ENCODE measurements at regions of chr3 and their contacts with region 1.

Region 1: DNA sequence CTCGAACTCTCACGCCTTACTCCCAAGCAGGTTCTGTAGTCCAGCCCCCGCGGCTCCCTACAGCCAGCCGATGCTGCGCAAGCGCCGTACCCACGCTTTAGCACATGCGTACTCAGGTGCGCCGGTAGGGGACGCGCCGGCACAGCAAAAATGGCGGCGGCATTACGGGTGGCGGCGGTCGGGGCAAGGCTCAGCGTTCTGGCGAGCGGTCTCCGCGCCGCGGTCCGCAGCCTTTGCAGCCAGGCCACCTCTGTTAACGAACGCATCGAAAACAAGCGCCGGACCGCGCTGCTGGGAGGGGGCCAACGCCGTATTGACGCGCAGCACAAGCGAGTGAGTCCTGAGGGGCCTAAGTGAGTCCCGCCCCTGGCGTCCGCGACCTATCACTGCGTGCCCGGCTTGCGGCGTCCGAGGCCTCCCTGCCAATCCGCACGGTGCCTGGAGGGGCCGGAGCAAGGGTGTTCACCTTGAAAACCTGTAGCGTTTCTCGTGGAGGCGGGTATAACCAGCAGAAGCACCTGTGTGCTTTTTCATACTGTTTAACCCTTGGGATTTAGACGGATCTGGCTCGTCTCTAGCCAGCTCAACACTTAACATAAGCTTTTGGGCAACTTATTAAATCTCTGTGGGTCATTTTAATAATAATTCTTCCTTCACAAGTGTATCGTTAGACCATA is at the start of gene PCCB:
- DNase-seq: peak; percentile 88
- ATAC-seq: peak; percentile 96
- H3K4me3 Mint-ChIP-seq: peak within 1 kb of the TSS; percentile 92
- H3K27ac Mint-ChIP-seq: peak within 1 kb of the TSS; percentile 95
- H3K4me1 Mint-ChIP-seq: peaks cover 23% of the 10 kb centered on the region
- H3K27me3 Mint-ChIP-seq: no peaks in the 10 kb centered on the region
- CTCF ChIP-seq: no peak
- total RNA-seq, gene PCCB: 31.2 and 31.8 TPM in 2 replicates

Region 2: DNA sequence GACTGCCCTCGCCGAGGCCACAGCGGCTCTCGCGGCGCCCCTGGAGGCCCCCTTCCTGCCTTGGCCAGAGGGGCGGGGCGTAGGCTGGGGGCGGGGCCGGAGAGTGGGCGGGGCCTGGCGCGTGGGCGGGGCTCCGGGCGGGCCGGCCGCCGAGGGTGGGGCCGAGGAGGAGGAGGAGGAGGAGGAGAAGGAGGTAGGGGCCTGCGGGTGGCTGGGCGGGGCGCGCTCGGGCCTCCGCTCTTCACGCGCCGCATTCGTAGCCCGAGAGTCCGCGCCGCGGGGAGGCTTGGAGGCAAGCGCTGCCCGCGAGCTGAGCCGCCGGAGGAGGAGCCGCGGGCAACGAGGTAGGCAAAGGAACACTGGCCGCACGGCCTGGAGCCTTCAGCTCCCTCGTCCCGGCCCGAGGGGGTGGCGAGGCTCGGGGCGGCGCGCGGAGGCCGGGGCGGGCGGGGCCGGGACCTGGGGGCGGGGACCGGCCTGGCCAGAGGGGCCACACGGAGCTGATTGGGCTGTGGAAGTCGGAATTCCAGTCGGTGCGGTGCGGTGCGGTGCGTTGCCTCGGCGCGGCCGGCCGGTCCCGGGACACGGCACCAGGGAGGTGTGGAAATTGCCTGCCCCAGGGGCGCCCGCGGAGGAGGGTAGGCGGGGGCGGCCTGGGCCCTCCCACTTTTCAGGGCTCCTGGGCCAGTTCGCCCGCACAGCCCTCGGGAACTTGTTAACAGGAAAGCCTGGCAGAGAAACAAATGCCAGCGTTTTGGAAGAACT is 284.7 kb before region 1 on chr3 and contains the start of gene PPP2R3A:
- CTCF ChIA-PET with region 1: no interaction called
- POLR2A ChIA-PET with region 1: no interaction called
- intact Hi-C with region 1: loop called (anchors 10 kb)
- DNase-seq: peak; percentile 54
- ATAC-seq: peak; percentile 90
- H3K4me3 Mint-ChIP-seq: peak within 1 kb of the TSS; percentile 75
- H3K27ac Mint-ChIP-seq: no peak within 1 kb of the TSS
- H3K4me1 Mint-ChIP-seq: peaks cover 9% of the 10 kb centered on the region
- H3K27me3 Mint-ChIP-seq: peaks cover 30% of the 10 kb centered on the region
- CTCF ChIP-seq: no peak
- total RNA-seq, gene PPP2R3A: 0.05 and 0.11 TPM in 2 replicates

Region 3: DNA sequence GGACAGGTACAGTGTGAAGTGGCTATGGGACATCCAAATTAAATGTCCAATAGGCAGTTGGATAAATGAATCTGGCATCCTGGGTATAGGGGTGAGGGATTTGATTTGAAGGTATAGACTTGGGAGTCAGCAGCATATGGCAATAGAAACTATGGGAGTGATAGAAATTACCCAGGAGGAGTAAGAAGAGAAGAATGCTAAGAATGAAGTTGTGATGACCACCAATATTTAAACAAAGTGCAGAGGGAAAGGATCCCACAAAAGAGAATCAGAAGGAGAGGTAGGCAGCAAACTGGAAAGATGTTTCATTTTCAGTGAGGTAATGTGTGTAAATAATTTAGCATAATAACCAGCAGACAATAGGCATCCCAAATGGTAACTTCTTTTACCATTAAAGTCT is 40.4 kb before region 1 on chr3:
- CTCF ChIA-PET with region 1: no interaction called
- POLR2A ChIA-PET with region 1: no interaction called
- intact Hi-C with region 1: no loop called
- DNase-seq: no peak
- ATAC-seq: no peak
- H3K4me3 Mint-ChIP-seq: no peak overlapping the region
- H3K27ac Mint-ChIP-seq: no peak overlapping the region
- H3K4me1 Mint-ChIP-seq: no peaks in the 10 kb centered on the region
- H3K27me3 Mint-ChIP-seq: peaks cover 7% of the 10 kb centered on the region
- CTCF ChIP-seq: no peak

Region 4: DNA sequence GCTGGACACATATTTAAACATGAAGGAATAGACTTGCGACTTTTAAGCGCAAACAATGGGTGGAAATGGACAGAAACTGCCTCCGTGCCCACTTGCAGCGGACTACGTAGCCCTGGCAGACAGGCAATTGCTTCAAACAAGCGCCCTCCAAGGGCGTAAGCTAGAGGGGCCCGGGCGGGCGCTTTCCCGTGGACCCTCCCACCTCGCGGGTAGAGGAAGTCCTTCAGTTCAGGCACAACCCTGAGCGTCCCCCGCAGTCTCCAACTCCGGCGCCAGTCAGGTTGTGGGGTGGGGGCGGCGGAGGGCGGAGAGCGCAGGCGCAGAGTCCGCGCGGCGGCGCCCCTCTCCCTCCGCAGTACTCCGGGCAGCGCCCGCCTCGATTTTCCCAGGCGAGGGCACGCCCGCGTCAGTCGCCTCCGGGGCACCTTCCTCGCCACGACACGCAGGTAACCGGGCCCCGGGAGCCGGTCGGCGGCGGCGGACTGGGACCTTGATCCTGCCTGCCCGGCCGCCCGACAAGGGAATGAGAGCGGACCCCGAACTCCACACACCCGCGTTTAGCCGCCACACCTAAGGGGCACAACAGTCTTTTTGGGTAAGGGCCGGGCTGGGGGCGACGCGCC is 568.5 kb after region 1 on chr3 and contains the start of gene SLC35G2:
- CTCF ChIA-PET with region 1: no interaction called
- POLR2A ChIA-PET with region 1: no interaction called
- intact Hi-C with region 1: loop called (anchors 1 kb)
- DNase-seq: peak; percentile 42
- ATAC-seq: peak; percentile 67
- H3K4me3 Mint-ChIP-seq: peak within 1 kb of the TSS; percentile 89
- H3K27ac Mint-ChIP-seq: peak within 1 kb of the TSS; percentile 87
- H3K4me1 Mint-ChIP-seq: peaks cover 22% of the 10 kb centered on the region
- H3K27me3 Mint-ChIP-seq: peaks cover 21% of the 10 kb centered on the region
- CTCF ChIP-seq: no peak
- total RNA-seq, gene SLC35G2: 4.2 and 4.3 TPM in 2 replicates

Measured in activated B cell treated with CpG ODN at 0.5 μM for 24 hours (primary cell).